Activated CD8-positive, alpha-beta T cell treated with anti-CD3 and anti-CD28 coated beads, Interleukin-2, amount 10 ng/mL, durations not matched to agents 7 days and 5 days (primary cell): ENCODE measurements at regions of chr15 and their contacts with region 1.

Region 1: DNA sequence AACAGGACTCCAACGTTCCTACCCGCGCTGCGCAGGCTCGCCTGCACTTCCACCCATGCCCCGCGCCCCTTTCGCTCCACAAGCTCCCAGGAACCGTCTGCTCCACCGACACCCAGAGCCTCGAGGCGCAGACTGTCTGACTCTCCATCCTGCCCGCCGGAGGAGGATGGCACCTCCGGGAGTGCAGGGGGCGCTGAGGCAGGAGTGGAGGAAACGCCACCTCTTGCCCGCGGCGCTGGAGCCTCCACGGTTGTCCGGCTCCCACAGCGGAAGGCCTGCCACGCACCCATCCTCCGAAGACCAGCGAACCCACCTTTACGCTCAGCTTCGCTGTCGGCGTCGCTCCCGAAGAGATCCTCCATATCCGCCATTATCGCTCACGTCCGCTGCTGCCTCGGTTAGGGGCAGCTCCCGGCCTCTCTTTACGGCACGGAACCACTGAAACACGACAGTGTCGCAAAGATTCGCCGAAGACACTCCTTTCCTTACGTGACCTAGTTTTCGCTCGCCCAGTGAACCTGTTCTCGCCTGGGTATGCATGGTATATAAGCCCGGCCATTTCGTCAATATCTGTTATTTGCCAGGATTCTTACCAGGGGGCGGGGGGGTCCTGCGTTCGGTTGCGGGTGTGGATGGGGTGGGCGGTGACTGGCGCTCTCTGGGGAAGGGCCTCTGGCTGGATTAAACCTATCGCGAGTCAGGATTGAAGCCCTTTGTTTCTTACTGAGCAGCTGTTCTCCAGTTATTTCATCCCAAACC is at the start of gene LEO1:
- DNase-seq: peak; percentile 95
- ATAC-seq: peak; percentile 88
- H3K4me3 Mint-ChIP-seq: peak within 1 kb of the TSS; percentile 88
- H3K27ac Mint-ChIP-seq: peak within 1 kb of the TSS; percentile 89
- H3K4me1 Mint-ChIP-seq: peaks cover 23% of the 10 kb centered on the region
- H3K27me3 Mint-ChIP-seq: no peaks in the 10 kb centered on the region
- total RNA-seq, gene LEO1: 30.3 to 33.4 TPM

Region 2: DNA sequence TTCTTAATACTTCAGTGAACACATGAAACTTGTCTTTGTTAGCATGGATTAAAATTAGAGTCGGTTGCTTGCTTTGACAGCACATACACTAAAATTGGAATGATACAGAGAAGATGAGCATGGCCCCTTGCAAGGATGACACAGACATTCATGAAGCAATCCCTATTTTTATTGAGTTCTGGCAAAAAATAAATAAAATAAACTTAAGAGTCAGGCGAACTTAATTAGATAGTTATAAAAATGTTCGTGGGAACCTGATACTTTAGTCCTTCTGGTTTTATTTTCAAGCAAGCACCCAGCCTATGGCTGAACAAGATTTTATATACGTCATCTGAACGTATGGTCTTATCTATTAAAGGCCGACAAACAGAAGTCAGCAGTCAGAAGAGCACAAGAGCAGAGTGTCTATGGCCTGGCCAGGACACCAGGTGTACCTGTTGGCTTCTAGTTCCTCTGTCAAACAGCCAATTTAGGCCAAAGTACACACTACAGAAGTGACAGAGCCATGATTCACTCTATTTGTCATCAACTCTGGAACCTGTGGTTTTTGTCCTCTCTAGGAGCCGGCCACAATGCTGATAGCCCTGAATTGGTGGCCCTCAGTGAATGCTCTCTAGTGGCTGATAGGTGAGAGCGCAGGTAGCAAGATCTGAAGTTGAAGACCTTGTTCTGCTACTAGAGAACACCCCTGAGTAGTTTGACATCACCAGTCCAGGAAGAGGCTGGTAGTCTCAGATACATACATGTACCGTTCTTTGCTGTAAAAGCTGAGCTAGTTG is 64.2 kb before region 1 on chr15:
- CTCF ChIA-PET with region 1: no interaction called
- POLR2A ChIA-PET with region 1: no interaction called
- DNase-seq: no peak
- ATAC-seq: no peak
- H3K4me3 Mint-ChIP-seq: no peak overlapping the region
- H3K27ac Mint-ChIP-seq: no peak overlapping the region
- H3K4me1 Mint-ChIP-seq: no peaks in the 10 kb centered on the region
- H3K27me3 Mint-ChIP-seq: no peaks in the 10 kb centered on the region

Region 3: GRCh38 chr15:51955504-51956101 is 16.0 kb before region 1 on chr15:
- CTCF ChIA-PET with region 1: no interaction called
- POLR2A ChIA-PET with region 1: no interaction called
- DNase-seq: no peak
- ATAC-seq: no peak
- H3K4me3 Mint-ChIP-seq: no peak overlapping the region
- H3K27ac Mint-ChIP-seq: no peak overlapping the region
- H3K4me1 Mint-ChIP-seq: no peaks in the 10 kb centered on the region
- H3K27me3 Mint-ChIP-seq: no peaks in the 10 kb centered on the region

Region 4: GRCh38 chr15:52005748-52006701 is 34.5 kb after region 1 on chr15:
- CTCF ChIA-PET with region 1: no interaction called
- POLR2A ChIA-PET with region 1: interaction called, 11 read pairs
- DNase-seq: no peak
- ATAC-seq: peak; percentile 18
- H3K4me3 Mint-ChIP-seq: no peak overlapping the region
- H3K27ac Mint-ChIP-seq: peak overlapping the region; percentile 71
- H3K4me1 Mint-ChIP-seq: peaks cover 48% of the 10 kb centered on the region
- H3K27me3 Mint-ChIP-seq: no peaks in the 10 kb centered on the region